Aorta (tissue), 5 donors: ENCODE measurements at regions of chr10 and their contacts with region 1.

Region 1: DNA sequence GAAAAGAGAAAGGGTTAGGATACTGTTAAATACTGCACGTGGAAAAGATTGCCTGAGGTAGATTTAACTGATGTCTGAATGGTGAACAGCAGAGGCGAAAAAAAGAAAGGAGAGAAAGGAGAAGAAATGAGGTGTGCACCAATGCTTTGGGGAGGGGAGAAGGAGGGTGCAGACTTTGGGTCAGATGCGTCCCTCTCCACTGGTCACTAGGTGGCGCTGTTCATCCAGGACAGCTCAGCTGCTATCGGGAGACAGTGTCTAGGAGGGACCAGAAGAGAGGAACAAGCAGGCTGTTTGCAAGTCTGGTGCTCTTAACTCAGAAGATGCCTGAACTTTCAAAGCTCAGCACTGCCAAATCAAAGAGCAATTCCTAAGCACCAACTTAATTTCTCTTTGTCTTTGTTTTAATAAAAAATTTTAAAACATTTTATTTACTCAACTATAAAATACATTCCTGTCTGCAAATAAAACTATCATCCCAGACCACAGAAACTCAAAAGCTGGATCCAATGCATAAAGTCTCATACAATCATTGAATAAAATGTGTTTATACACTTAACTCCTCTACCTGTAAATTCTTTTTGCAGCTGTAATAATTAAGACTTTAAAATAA is 83.9 kb upstream of the PDLIM1 start:
- DNase-seq: peak; percentile 80 to 88
- ATAC-seq: peak; percentile 91
- H3K4me3 ChIP-seq: no peak overlapping the region
- H3K27ac ChIP-seq: no peak overlapping the region
- H3K4me1 ChIP-seq: peaks cover 1 to 8% of the 10 kb centered on the region in 2 donors
- H3K27me3 ChIP-seq: no peaks in the 10 kb centered on the region

Region 2: GRCh38 chr10:95414844-95415485 is 40.3 kb after region 1 on chr10:
- intact Hi-C with region 1: loop called (anchors 5 to 10 kb)
- DNase-seq: peak; percentile 70 to 84
- ATAC-seq: peak; percentile 74
- H3K4me3 ChIP-seq: no peak overlapping the region
- H3K27ac ChIP-seq: peak overlapping the region; percentile 39 to 84
- H3K4me1 ChIP-seq: peaks cover 8 to 14% of the 10 kb centered on the region in 2 donors
- H3K27me3 ChIP-seq: no peaks in the 10 kb centered on the region

Region 3: GRCh38 chr10:95423164-95424005 is 48.7 kb after region 1 on chr10:
- intact Hi-C with region 1: loop called in 1 of 2 experiments (anchors 10 kb)
- DNase-seq: no peak
- ATAC-seq: no peak
- H3K4me3 ChIP-seq: no peak overlapping the region
- H3K27ac ChIP-seq: peak overlapping the region; percentile 61 to 66
- H3K4me1 ChIP-seq: peaks cover 0 to 8% of the 10 kb centered on the region in 2 donors
- H3K27me3 ChIP-seq: no peaks in the 10 kb centered on the region

Region 4: GRCh38 chr10:95430231-95430951 is 55.7 kb after region 1 on chr10:
- intact Hi-C with region 1: loop called (anchors 5 to 10 kb)
- DNase-seq: no peak
- ATAC-seq: peak; percentile 78
- H3K4me3 ChIP-seq: no peak overlapping the region
- H3K27ac ChIP-seq: peak overlapping the region in 1 of 2 donors; percentile 43
- H3K4me1 ChIP-seq: peaks cover 0 to 7% of the 10 kb centered on the region in 2 donors
- H3K27me3 ChIP-seq: no peaks in the 10 kb centered on the region

Region 5: GRCh38 chr10:95447685-95448084 is 73.0 kb after region 1 on chr10:
- intact Hi-C with region 1: no loop called
- DNase-seq: no peak
- ATAC-seq: peak; percentile 20
- H3K4me3 ChIP-seq: no peak overlapping the region
- H3K27ac ChIP-seq: peak overlapping the region; percentile 53 to 95
- H3K4me1 ChIP-seq: peaks cover 16% of the 10 kb centered on the region in 2 donors
- H3K27me3 ChIP-seq: no peaks in the 10 kb centered on the region

Region 6: DNA sequence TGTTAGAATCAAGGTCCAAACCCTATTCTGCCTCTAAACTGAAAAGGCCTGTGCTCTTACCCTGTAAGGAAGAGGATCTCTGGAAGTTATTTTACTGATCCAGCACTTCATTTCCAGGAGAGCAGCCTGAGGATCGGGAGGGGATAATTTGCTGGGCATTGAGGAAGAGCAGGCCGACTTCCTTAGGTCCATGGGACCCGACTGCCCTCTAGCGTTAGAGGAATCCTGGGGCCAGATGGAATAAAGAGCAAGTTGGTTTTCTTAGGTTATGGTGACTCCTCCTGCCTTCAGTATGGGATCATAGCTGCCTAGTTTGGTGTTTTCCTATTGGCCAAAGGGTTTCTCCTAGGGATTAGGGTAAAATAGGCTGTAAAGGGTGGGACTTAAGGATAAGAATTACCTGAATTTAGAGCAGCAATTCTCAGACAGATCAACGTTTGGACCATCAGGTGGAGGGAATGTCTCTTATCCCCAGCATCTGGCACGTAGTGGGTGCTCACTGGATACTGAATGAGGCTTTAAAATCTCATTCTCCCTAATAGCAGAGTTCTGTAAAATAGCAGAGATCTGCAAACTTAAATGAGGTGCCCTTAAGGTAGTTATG is 226.5 kb after region 1 on chr10:
- intact Hi-C with region 1: loop called (anchors 1 to 5 kb)
- DNase-seq: peak; percentile 85 to 88
- ATAC-seq: peak; percentile 90
- H3K4me3 ChIP-seq: no peak overlapping the region
- H3K27ac ChIP-seq: no peak overlapping the region
- H3K4me1 ChIP-seq: peaks cover 0 to 10% of the 10 kb centered on the region in 2 donors
- H3K27me3 ChIP-seq: no peaks in the 10 kb centered on the region

Region 7: DNA sequence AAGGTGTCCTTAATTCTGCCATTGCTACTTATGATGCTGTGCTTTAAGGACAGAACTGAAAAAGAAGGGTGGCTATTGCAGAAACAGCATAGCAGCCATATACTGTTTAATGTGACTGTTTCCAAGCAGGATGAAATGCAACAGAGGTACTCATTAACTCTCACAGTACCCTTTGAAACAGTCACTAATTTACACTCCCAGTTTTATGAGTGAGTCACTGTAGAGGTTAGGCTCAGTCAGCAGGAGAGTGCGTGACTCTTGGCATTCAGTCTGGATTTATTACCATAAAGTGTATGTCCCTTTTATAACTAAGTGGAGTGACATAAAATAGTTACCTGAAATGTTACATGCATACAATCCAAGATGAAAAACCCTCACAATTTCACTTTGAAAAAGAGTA is 254.1 kb after region 1 on chr10:
- intact Hi-C with region 1: loop called in 1 of 2 experiments (anchors 5 kb)
- DNase-seq: no peak
- ATAC-seq: no peak
- H3K4me3 ChIP-seq: no peak overlapping the region
- H3K27ac ChIP-seq: no peak overlapping the region
- H3K4me1 ChIP-seq: no peaks in the 10 kb centered on the region
- H3K27me3 ChIP-seq: no peaks in the 10 kb centered on the region